Right lobe of liver (tissue), 6 donors: ENCODE measurements at regions of chr12 and their contacts with region 1.

Region 1: GRCh38 chr12:100356644-100357223 is at the start of gene SLC17A8:
- DNase-seq: no peak
- ATAC-seq: peak in 2 of 4 donors; percentile 42 to 54
- H3K4me3 ChIP-seq: no peak within 1 kb of the TSS
- H3K27ac ChIP-seq: no peak within 1 kb of the TSS
- H3K4me1 ChIP-seq: peaks cover 0 to 6% (median 0%) of the 10 kb centered on the region in 4 donors
- H3K27me3 ChIP-seq: no peaks in the 10 kb centered on the region
- CTCF ChIP-seq: no peak
- POLR2A ChIP-seq: no peak
- total RNA-seq, gene SLC17A8: 0.06 to 0.51 (median 0.23) TPM

Region 2: GRCh38 chr12:99920353-99920960 is 436.3 kb before region 1 on chr12:
- intact Hi-C with region 1: no loop called
- DNase-seq: no peak
- ATAC-seq: no peak
- H3K4me3 ChIP-seq: no peak overlapping the region
- H3K27ac ChIP-seq: no peak overlapping the region
- H3K4me1 ChIP-seq: no peaks in the 10 kb centered on the region
- H3K27me3 ChIP-seq: no peaks in the 10 kb centered on the region
- CTCF ChIP-seq: no peak
- POLR2A ChIP-seq: no peak

Region 3: DNA sequence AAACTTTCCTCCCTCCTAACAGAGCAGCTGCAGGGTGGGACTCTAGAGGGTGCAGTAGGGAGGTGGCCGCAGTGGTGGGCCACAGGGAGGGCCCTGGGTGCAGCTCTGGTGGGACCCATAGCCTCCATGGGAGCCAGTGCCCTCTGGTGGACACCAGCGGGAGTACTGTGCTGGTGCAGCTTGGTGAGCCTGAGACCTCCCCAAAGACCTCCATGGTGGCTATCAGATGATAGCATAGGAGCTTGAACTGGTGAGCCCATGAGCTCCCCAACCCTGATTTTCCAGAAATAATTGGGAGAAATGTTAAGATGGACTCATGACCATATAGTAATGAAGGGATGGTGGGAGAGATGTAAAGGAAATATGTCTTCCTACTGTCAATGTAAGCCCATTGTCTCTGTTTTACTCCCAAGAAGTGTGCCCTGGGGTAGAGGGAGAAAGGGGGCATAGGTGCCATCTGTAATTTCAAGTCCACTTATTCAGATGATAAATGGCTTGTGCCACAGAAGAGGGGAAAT is 315.4 kb after region 1 on chr12:
- intact Hi-C with region 1: loop called in 1 of 2 experiments (anchors 10 kb)
- DNase-seq: no peak
- ATAC-seq: peak; percentile 49 to 70 (median 57)
- H3K4me3 ChIP-seq: no peak overlapping the region
- H3K27ac ChIP-seq: no peak overlapping the region
- H3K4me1 ChIP-seq: no peaks in the 10 kb centered on the region
- H3K27me3 ChIP-seq: no peaks in the 10 kb centered on the region
- CTCF ChIP-seq: peak; percentile 32 to 71 (median 64)
- POLR2A ChIP-seq: no peak

Region 4: GRCh38 chr12:100733817-100734593 is 377.3 kb after region 1 on chr12:
- intact Hi-C with region 1: loop called in 1 of 2 experiments (anchors 10 kb)
- DNase-seq: no peak
- ATAC-seq: peak in 3 of 4 donors; percentile 52 to 61 (median 57)
- H3K4me3 ChIP-seq: no peak overlapping the region
- H3K27ac ChIP-seq: no peak overlapping the region
- H3K4me1 ChIP-seq: no peaks in the 10 kb centered on the region
- H3K27me3 ChIP-seq: no peaks in the 10 kb centered on the region
- CTCF ChIP-seq: peak; percentile 54 to 67 (median 60)
- POLR2A ChIP-seq: no peak